ENCODE measurements at regions of chr7 and their contacts with region 1.

Region 1: GRCh38 chr7:44622307-44623151 is 16.1 kb downstream of the OGDH start:
- DNase-seq: peak; percentile 40
- H3K4me3 Mint-ChIP-seq: peak overlapping the region; percentile 60
- H3K27ac Mint-ChIP-seq: peak overlapping the region; percentile 94
- H3K4me1 Mint-ChIP-seq: peaks cover 83% of the 10 kb centered on the region
- H3K27me3 Mint-ChIP-seq: no peaks in the 10 kb centered on the region

Region 2: GRCh38 chr7:44633254-44634186 is 11.0 kb after region 1 on chr7:
- intact Hi-C with region 1: loop called (anchors 1 kb)
- DNase-seq: peak; percentile 45
- H3K4me3 Mint-ChIP-seq: peak overlapping the region; percentile 64
- H3K27ac Mint-ChIP-seq: peak overlapping the region; percentile 87
- H3K4me1 Mint-ChIP-seq: peaks cover 84% of the 10 kb centered on the region
- H3K27me3 Mint-ChIP-seq: no peaks in the 10 kb centered on the region

Region 3: GRCh38 chr7:44905002-44905635 is 282.6 kb after region 1 on chr7:
- intact Hi-C with region 1: no loop called
- DNase-seq: no peak
- H3K4me3 Mint-ChIP-seq: no peak overlapping the region
- H3K27ac Mint-ChIP-seq: no peak overlapping the region
- H3K4me1 Mint-ChIP-seq: no peaks in the 10 kb centered on the region
- H3K27me3 Mint-ChIP-seq: peaks cover 6% of the 10 kb centered on the region

Measured in activated T-helper 1 cell treated with anti-CD3 and anti-CD28 coated beads, Interleukin-12 subunit alpha, Interleukin-12 subunit beta, Interleukin-2, Interleukin-4 antibody, amounts not matched to agents 30 ng/mL and 10 ng/mL and 1 ng/mL, durations not matched to agents 14 hours and 24 hours and 36 hours (primary cell).